Mucosa of descending colon (tissue), 3 donors: ENCODE measurements at regions of chr3 and their contacts with region 1.

Region 1: GRCh38 chr3:149473357-149474249 is 894 bp upstream of the TM4SF4 start:
- DNase-seq: peak in 2 of 3 donors; percentile 32 to 64
- ATAC-seq: peak; percentile 99
- H3K4me3 ChIP-seq: no peak overlapping the region
- H3K4me1 ChIP-seq: peaks cover 15% of the 10 kb centered on the region
- CTCF ChIP-seq: no peak

Region 2: DNA sequence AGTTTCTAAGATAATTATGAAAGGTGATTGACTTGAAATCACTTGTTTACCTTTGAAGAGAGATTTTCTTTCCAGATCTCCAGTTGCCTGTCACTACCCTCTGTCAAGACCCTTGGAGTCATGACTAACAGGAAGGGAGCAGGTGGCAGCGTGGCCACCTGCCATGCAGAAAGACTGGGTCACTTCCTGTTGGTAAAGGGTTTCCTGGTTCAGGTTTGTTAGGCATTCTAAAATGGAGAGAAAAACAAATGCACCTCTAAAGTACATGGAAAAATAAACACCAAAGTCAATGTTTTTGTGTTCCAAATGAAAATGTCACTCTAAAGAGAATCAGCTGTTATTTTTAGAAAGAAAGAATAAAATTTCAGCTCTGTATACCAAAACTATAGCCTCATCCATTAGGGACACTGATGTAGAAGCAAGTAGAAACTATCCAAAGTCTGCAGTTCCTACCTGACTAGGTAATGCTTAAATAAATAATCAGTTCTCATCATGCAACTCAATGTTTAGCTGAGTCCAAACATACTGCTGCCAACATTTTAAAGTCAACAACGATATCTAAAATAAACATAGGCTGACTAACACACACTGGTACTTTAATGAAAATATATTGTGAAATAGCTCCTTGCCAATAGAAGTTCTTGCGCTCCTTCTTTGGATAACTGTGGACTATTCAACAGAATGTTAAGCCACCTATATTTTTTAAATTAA is 72.2 kb before region 1 on chr3:
- intact Hi-C with region 1: loop called in 1 of 2 experiments (anchors 10 kb)
- DNase-seq: peak in 2 of 3 donors; percentile 45 to 62
- ATAC-seq: peak; percentile 96
- H3K4me3 ChIP-seq: no peak overlapping the region
- H3K4me1 ChIP-seq: no peaks in the 10 kb centered on the region
- CTCF ChIP-seq: no peak